ENCODE measurements at regions of chr2 and their contacts with region 1.

Region 1: DNA sequence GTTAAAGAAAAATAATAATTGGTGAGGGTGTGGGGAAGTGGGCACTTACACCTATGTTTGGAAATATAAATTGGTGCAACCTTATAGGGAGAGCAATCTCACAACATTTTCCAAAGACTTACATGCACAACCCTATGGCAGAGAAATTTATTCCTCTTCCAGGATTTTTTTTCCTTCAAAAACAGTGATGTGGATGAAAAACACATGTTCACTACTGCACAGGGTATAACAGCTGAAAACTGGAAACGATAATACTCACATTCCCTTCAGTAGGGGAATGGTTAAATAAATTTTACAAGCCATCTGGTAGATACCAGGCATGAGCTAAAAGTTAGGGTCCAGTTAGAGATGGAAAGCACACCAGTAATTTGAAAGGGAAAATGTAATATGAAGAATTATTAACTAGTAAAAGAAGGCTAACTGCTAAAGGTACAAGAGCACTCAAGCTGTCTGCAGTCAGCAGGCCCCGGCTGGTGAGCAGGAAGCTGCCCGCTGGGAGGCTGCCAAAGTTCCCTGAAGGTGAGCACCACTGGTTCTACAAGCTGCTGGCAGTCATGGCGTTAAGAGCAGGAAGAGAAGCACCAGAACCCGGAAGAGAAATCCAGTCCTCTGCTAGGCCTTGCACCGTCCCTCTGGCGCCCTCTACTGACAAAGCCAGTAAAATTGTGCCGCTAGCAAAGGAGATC is 28.4 kb upstream of the CASP8 start:
- DNase-seq: peak; percentile 75 to 95 (median 91)
- ATAC-seq: peak; percentile 79
- H3K4me3 ChIP-seq: peak overlapping the region; percentile 70
- H3K4me3 Mint-ChIP-seq: peak overlapping the region; percentile 66 to 99 (median 96)
- H3K27ac ChIP-seq: no peak overlapping the region
- H3K27ac Mint-ChIP-seq: peak overlapping the region; percentile 85 to 98 (median 95)
- H3K4me1 ChIP-seq: peaks cover 27 to 32% of the 10 kb centered on the region in 2 donors
- H3K4me1 Mint-ChIP-seq: peaks cover 28 to 77% (median 67%) of the 10 kb centered on the region in 7 donors
- H3K27me3 ChIP-seq: no peaks in the 10 kb centered on the region
- H3K27me3 Mint-ChIP-seq: no peaks in the 10 kb centered on the region

Region 2: GRCh38 chr2:200864176-200864976 is 367.5 kb before region 1 on chr2 and contains the start of gene CLK1:
- CTCF ChIA-PET with region 1: interaction called, 3 read pairs
- POLR2A ChIA-PET with region 1: interaction called, 25 read pairs
- intact Hi-C with region 1: loop called (anchors 1 kb)
- DNase-seq: peak; percentile 87 to 97 (median 94)
- ATAC-seq: peak; percentile 89
- H3K4me3 ChIP-seq: peak within 1 kb of the TSS; percentile 100
- H3K4me3 Mint-ChIP-seq: peak within 1 kb of the TSS; percentile 89 to 98 (median 94)
- H3K27ac ChIP-seq: peak within 1 kb of the TSS; percentile 98
- H3K27ac Mint-ChIP-seq: peak within 1 kb of the TSS; percentile 99 to 100 (median 100)
- H3K4me1 ChIP-seq: peaks cover 23 to 26% of the 10 kb centered on the region in 2 donors
- H3K4me1 Mint-ChIP-seq: peaks cover 28 to 58% (median 48%) of the 10 kb centered on the region in 7 donors
- H3K27me3 ChIP-seq: no peaks in the 10 kb centered on the region
- H3K27me3 Mint-ChIP-seq: peaks cover 0 to 2% (median 0%) of the 10 kb centered on the region in 5 donors
- total RNA-seq, gene CLK1: 134 to 974 (median 502) TPM

Region 3: GRCh38 chr2:201118121-201118960 is 113.6 kb before region 1 on chr2:
- CTCF ChIA-PET with region 1: interaction called, 10 read pairs
- POLR2A ChIA-PET with region 1: interaction called, 47 read pairs
- intact Hi-C with region 1: loop called (anchors 1 to 2 kb)
- DNase-seq: peak; percentile 66 to 85 (median 79)
- ATAC-seq: peak; percentile 65
- H3K4me3 ChIP-seq: peak overlapping the region; percentile 87
- H3K4me3 Mint-ChIP-seq: peak overlapping the region; percentile 90 to 100 (median 97)
- H3K27ac ChIP-seq: peak overlapping the region; percentile 93
- H3K27ac Mint-ChIP-seq: peak overlapping the region; percentile 90 to 100 (median 98)
- H3K4me1 ChIP-seq: peaks cover 23 to 36% of the 10 kb centered on the region in 2 donors
- H3K4me1 Mint-ChIP-seq: peaks cover 31 to 64% (median 50%) of the 10 kb centered on the region in 7 donors
- H3K27me3 ChIP-seq: no peaks in the 10 kb centered on the region
- H3K27me3 Mint-ChIP-seq: peaks cover 0 to 2% (median 0%) of the 10 kb centered on the region in 5 donors

Region 4: DNA sequence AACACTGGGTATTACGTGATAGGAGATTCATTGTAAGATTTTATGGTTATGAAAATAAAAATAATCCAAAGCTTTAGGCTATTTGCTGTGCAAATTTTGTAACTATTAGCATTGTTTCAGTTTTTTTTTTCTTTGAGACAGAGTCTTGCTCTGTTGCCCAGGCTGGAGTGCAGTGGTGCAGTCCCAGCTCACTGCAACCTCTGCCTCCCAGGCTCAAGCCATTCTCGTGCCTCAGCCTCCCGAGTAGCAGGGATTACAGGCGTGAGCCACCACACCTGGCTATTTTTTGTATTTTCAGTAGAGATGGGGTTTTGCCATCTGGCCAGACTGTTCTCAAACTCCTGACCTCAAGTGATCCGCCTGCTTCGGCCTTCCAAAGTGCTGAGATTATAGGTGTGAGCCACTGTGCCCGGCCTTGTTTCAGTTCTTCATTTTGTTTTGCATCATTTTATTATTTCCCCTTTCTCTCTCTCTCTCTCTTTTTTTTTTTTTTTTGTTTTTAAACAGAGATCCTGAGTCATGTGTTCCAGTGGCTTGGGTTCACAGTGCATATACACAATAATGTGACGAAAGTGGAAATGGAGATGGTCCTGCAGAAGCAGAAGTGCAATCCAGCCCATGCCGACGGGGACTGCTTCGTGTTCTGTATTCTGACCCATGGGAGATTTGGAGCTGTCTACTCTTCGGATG is 23.2 kb before region 1 on chr2:
- CTCF ChIA-PET with region 1: interaction called, 18 read pairs
- POLR2A ChIA-PET with region 1: interaction called, 11 read pairs
- intact Hi-C with region 1: loop called (anchors 1 kb)
- DNase-seq: no peak
- ATAC-seq: peak; percentile 75
- H3K4me3 ChIP-seq: no peak overlapping the region
- H3K4me3 Mint-ChIP-seq: no peak overlapping the region
- H3K27ac ChIP-seq: no peak overlapping the region
- H3K27ac Mint-ChIP-seq: peak overlapping the region in 7 of 9 donors; percentile 20 to 63 (median 31)
- H3K4me1 ChIP-seq: peaks cover 0 to 29% of the 10 kb centered on the region in 2 donors
- H3K4me1 Mint-ChIP-seq: peaks cover 18 to 62% (median 33%) of the 10 kb centered on the region in 7 donors
- H3K27me3 ChIP-seq: no peaks in the 10 kb centered on the region
- H3K27me3 Mint-ChIP-seq: no peaks in the 10 kb centered on the region

Region 5: GRCh38 chr2:201363857-201364560 is 132.1 kb after region 1 on chr2:
- CTCF ChIA-PET with region 1: interaction called, 67 read pairs
- POLR2A ChIA-PET with region 1: interaction called, 14 read pairs
- intact Hi-C with region 1: loop called (anchors 1 kb)
- DNase-seq: peak in 7 of 9 donors; percentile 21 to 64 (median 61)
- ATAC-seq: peak; percentile 96
- H3K4me3 ChIP-seq: no peak overlapping the region
- H3K4me3 Mint-ChIP-seq: peak overlapping the region in 5 of 10 donors; percentile 11 to 49 (median 32)
- H3K27ac ChIP-seq: no peak overlapping the region
- H3K27ac Mint-ChIP-seq: peak overlapping the region in 7 of 9 donors; percentile 9 to 84 (median 75)
- H3K4me1 ChIP-seq: peaks cover 0 to 24% of the 10 kb centered on the region in 2 donors
- H3K4me1 Mint-ChIP-seq: peaks cover 11 to 45% (median 41%) of the 10 kb centered on the region in 7 donors
- H3K27me3 ChIP-seq: no peaks in the 10 kb centered on the region
- H3K27me3 Mint-ChIP-seq: no peaks in the 10 kb centered on the region

Region 6: DNA sequence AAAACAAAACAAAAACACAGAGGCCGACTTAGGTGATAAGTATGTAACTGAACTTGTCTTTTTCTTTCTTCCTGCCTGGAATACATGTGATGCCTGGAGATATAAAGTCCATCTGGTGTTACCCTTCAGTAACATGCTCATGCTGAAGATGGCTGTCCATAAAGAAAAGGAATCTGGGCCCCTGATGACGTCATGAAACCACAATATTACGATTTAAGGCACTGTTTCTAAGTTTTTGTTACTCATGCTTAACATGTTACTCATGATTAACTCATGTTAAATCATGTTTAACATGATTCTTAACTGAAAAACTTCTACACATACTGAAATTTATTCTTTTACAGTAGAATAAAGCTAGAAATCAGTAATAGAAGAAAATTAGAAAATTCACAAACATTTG is 268.6 kb after region 1 on chr2:
- CTCF ChIA-PET with region 1: no interaction called
- POLR2A ChIA-PET with region 1: no interaction called
- intact Hi-C with region 1: no loop called
- DNase-seq: no peak
- ATAC-seq: no peak
- H3K4me3 ChIP-seq: no peak overlapping the region
- H3K4me3 Mint-ChIP-seq: no peak overlapping the region
- H3K27ac ChIP-seq: no peak overlapping the region
- H3K27ac Mint-ChIP-seq: no peak overlapping the region
- H3K4me1 ChIP-seq: no peaks in the 10 kb centered on the region
- H3K4me1 Mint-ChIP-seq: no peaks in the 10 kb centered on the region
- H3K27me3 ChIP-seq: no peaks in the 10 kb centered on the region
- H3K27me3 Mint-ChIP-seq: peaks cover 0 to 7% (median 0%) of the 10 kb centered on the region in 5 donors

Region 7: GRCh38 chr2:202033321-202034248 is 801.7 kb after region 1 on chr2 and contains the start of gene FZD7:
- CTCF ChIA-PET with region 1: no interaction called
- POLR2A ChIA-PET with region 1: no interaction called
- intact Hi-C with region 1: loop called in 1 of 2 experiments (anchors 10 kb)
- DNase-seq: peak; percentile 70 to 87 (median 81)
- ATAC-seq: peak; percentile 92
- H3K4me3 ChIP-seq: peak within 1 kb of the TSS; percentile 91
- H3K4me3 Mint-ChIP-seq: peak within 1 kb of the TSS in 9 of 10 donors; percentile 87 to 96 (median 92)
- H3K27ac ChIP-seq: peak within 1 kb of the TSS; percentile 44
- H3K27ac Mint-ChIP-seq: peak within 1 kb of the TSS in 8 of 9 donors; percentile 46 to 83 (median 72)
- H3K4me1 ChIP-seq: peaks cover 9 to 11% of the 10 kb centered on the region in 2 donors
- H3K4me1 Mint-ChIP-seq: peaks cover 6 to 17% (median 14%) of the 10 kb centered on the region in 7 donors
- H3K27me3 ChIP-seq: peaks cover 6 to 22% of the 10 kb centered on the region in 2 donors
- H3K27me3 Mint-ChIP-seq: peaks cover 0 to 45% (median 7%) of the 10 kb centered on the region in 5 donors
- total RNA-seq, gene FZD7: 0.27 to 0.99 (median 0.43) TPM